ENCODE measurements at regions of chr12 and their contacts with region 1.

Region 1: DNA sequence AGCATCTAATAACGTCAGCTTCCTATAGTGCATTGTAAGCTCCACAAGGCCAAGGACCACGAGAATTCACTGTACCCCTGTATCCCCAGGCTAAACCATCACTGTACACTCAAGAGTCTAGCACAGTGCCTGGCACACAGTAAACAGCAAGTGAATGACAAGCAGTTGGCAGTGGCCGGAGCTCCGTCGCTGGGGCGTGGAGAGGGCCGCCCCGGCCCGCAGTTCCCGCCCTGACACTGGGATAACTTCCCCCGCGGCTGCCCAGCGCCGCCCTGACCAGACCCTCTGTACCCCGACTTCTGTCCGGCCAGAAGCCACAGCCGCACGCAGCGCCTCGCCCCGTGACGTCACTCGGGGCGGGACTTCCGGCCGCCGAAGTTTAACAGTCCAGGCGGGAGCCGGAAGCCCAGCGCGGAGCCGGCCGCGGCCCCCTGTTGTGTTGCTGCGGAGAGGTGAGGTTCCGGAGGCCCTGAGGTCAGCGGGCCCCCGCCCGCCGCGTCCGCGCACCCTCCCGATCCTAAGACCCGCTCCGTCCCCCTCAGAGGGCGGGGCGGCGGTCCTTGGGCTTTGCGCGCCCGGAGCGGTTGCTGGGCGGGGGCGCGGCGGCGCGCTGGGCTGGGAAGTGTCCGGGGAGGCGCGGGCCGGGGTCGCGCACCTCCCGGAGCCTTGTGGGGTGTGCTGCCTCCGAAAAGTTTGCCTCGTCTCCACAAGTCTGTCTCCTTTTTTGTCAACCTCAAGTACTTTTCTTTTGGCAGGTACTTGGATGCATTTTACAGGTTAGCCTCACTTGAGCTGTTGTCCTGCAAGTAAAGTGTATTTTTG is at the start of gene NEDD1:
- H3K4me3 Mint-ChIP-seq: peak within 1 kb of the TSS; percentile 91
- H3K27ac Mint-ChIP-seq: peak within 1 kb of the TSS; percentile 91
- H3K4me1 Mint-ChIP-seq: peaks cover 36% of the 10 kb centered on the region
- H3K27me3 Mint-ChIP-seq: peaks cover 8% of the 10 kb centered on the region

Region 2: DNA sequence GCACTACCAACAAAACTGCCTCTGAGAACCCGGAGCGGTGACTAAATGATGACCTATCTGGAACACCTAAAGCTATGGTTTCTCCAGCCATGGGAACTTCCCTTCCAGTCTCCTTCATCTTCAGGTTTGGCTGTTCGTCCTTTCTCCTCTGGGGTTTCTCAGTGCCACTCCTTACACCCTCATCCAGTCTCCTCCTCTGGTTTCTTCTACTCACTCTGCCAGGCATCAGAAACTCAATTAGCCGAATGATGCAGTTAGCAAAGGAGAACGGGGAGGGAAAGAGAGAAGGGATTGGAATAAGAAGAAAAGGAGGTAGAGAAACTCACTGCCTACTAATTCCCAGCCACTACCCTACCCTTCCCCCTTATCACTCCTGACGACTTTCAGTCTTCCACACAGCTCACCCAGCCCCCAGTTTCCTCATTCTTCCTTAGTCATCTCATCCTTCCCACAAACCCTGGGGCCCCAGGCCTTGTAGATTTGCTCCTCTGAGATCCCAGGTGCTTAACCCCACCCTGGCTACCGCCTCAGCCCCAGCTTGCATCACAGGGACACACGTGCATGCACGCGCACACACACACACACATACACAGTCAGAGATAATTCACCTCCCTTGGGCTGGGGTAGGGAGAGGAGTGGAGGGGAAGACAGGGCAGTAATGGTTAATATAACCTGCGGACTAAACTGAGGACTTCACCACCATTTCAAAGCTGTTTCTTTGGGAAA is 1702.8 kb before region 1 on chr12:
- intact Hi-C with region 1: loop called (anchors 10 kb)
- H3K4me3 Mint-ChIP-seq: peak overlapping the region; percentile 51
- H3K27ac Mint-ChIP-seq: peak overlapping the region; percentile 72
- H3K4me1 Mint-ChIP-seq: peaks cover 62% of the 10 kb centered on the region
- H3K27me3 Mint-ChIP-seq: no peaks in the 10 kb centered on the region